ENCODE measurements at regions of chr10 and their contacts with region 1.

Region 1: DNA sequence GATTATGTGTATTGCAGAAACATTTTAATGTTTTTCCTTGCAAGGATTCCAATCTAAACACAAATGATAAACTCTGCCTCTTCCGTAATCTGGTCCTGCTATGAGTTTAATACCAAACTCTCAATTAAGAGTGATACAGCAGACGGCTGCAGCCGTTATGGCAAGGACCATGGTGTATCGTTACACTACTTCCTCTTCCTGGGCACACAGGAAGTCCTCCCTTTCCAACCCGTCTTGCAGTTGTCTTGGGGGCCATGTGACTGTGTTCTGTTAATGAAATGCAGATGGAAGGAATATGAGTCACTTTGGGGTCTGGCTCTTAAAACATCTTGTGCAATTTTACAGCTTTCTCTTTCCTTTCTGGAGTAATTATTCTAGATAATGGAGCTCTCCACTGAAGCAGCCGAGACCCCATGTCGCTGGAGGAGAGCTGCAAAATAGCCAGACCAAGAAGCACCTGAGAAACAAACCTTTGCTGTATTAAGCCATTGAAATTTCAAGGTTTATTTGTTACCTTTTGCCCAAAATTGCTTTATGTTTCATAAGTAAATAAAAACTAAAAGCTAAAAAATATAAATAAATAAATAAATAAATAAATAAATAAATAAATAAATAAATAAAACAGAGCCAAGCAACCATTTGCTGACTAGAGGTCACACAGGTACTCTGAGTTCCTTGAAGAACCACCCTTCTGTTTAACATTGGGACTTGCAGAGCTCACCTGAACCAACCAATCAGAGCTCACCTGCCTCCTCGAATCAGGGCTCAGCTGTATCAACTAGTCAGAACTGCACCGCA is 74.7 kb downstream of the FRMPD2 start:
- DNase-seq: no peak

Region 2: DNA sequence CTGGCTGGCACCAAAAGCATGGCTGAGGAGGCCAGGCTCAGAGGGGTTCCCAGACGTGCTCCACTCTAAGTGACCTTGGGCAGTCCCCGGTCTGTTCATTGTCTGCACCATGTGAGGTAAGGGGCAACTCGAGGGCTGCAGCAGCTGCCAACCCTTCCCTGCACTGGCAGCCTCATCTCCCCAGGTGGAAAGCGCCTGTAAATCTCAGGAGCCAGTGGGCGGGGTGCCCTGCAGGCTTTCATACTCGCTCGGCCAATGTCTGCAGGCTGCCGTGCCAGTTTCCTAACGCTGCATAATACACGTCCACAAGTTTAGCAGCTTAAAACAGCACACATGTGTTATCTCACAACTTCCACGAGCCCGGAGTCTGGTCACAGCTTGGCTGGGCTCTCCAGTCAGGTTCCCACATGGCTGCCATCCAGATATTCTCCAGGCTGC is 912.4 kb before region 1 on chr10:
- intact Hi-C with region 1: no loop called
- DNase-seq: no peak

Region 3: GRCh38 chr10:48804740-48805182 is 605.0 kb after region 1 on chr10:
- intact Hi-C with region 1: loop called in 1 of 2 experiments (anchors 5 kb)
- DNase-seq: no peak

Measured in posterior vena cava (tissue), 2 donors.